ENCODE measurements at regions of chr4 and their contacts with region 1.

Region 1: DNA sequence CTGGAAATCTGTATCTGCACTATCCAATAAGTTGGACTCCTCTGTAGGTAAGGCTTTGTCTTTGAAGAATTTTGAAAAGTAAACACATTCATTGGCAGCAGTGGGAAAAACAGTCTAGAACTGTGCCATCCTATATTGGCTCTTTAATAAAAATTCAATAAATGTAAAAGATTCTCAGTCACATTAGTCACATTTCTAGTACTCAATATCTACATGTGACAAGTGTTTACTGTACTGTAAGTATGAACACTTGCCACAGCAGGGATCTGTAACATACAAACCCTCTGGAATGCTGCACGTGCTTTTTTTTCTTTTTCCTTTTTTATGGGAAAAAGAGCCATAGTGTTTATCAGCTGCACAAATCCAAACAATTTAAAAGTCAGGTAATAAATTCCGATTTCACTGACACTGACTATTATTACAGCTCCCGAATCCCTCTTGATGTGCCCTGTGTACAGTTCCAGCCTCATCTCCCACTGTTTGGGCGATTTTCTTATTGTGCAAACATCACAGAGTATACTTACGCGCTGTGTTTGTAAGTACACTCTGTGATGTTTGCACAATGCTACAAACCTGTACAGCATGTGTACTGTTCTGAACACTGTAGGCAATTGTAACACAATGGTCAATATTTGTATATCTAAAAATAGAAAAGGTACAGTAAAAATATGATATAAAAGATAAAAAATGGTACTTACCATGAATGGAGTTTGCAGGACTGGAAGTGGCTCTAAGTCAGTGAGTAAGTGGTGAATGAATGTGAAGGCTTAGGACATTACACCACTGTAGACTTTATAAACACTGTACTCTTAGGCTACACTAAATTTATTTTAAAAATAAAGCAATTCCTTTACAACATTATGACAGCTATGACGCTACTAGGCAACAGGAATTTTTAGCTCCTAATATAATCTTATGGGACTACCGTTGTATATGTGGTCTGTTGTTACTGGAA is 8.7 kb downstream of the PYURF start:
- DNase-seq: no peak
- H3K4me3 ChIP-seq: no peak overlapping the region
- CTCF ChIP-seq: no peak

Region 2: GRCh38 chr4:88217920-88218319 is 296.9 kb before region 1 on chr4:
- CTCF ChIA-PET with region 1: interaction called, 360 read pairs
- POLR2A ChIA-PET with region 1: no interaction called
- DNase-seq: no peak
- H3K4me3 ChIP-seq: no peak overlapping the region
- CTCF ChIP-seq: no peak

Region 3: GRCh38 chr4:88225232-88226105 is 289.4 kb before region 1 on chr4:
- CTCF ChIA-PET with region 1: interaction called, 360 read pairs
- POLR2A ChIA-PET with region 1: no interaction called
- DNase-seq: no peak
- H3K4me3 ChIP-seq: no peak overlapping the region
- CTCF ChIP-seq: no peak

Region 4: DNA sequence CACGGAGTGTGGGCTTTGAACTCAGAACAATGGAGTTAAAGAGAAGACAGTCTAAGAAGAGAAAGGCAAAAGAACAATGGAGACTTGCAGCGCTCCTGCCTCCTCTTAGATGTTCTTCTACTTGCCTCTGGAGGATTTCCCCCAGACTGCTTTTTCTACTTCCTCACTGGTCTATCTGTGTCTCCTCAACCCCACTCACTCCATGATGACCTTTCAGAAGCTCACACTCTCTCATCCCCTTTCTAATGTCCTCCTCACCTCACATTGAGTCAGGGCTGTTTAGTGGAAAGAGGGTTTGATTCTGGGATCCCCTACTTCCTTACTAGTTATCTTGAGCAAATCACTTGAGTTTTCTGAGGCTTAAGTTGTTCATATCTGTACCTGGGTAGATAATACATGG is 148.4 kb before region 1 on chr4:
- CTCF ChIA-PET with region 1: interaction called, 38 read pairs
- POLR2A ChIA-PET with region 1: no interaction called
- DNase-seq: no peak
- H3K4me3 ChIP-seq: no peak overlapping the region
- CTCF ChIP-seq: no peak

Region 5: GRCh38 chr4:88378691-88379559 is 135.9 kb before region 1 on chr4 and contains the start of gene HERC6:
- CTCF ChIA-PET with region 1: interaction called, 28 read pairs
- POLR2A ChIA-PET with region 1: no interaction called
- DNase-seq: no peak
- H3K4me3 ChIP-seq: peak within 1 kb of the TSS; percentile 82
- CTCF ChIP-seq: peak; percentile 85